Pancreas (tissue), 10 donors: ENCODE measurements at regions of chr6 and their contacts with region 1.

Region 1: DNA sequence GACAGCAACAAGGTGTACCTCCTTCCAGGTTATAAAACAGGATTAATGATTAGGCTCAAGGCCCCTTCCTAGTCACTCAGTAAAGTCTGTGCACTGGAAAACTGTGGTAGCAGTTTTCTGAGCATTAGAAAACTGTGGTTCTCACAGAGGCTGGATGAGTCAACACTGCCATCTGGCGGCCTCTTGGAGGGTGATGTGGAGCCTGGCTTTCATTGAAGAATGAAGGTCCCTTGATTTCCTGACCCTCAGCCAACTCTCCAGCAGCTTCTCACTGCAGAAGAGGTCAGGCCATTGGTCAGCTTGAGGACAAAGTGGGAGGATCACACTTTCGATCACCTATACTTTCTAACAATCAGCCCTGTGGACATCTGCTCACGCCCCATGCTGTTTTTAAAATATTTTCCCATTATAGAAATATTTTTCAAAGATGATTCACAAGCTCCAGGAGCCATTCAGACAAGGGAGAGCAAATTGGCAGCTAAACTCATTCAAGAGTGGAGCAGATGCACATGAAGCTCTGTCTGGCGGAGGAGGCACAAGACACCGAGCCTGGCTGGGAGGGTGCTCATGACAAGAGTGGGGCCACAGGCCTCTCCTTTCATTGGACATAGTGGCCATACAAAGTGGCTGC is 23.2 kb downstream of the PSMB1 start:
- DNase-seq: peak; percentile 60 to 84 (median 78)
- ATAC-seq: peak; percentile 89 to 99 (median 94)
- H3K4me3 ChIP-seq: no peak overlapping the region
- H3K27ac ChIP-seq: no peak overlapping the region
- H3K4me1 ChIP-seq: peaks cover 0 to 6% (median 0%) of the 10 kb centered on the region in 3 donors
- H3K27me3 ChIP-seq: no peaks in the 10 kb centered on the region
- CTCF ChIP-seq: peak; percentile 66 to 83 (median 72)

Region 2: GRCh38 chr6:169789982-169790927 is 739.7 kb before region 1 on chr6:
- intact Hi-C with region 1: loop called in 2 of 3 experiments (anchors 10 kb)
- DNase-seq: peak; percentile 56 to 88 (median 74)
- ATAC-seq: peak; percentile 95 to 99 (median 98)
- H3K4me3 ChIP-seq: peak overlapping the region in 3 of 4 donors; percentile 6 to 48 (median 31)
- H3K27ac ChIP-seq: peak overlapping the region in 2 of 4 donors; percentile 24 to 56
- H3K4me1 ChIP-seq: peaks cover 0 to 9% (median 0%) of the 10 kb centered on the region in 3 donors
- H3K27me3 ChIP-seq: no peaks in the 10 kb centered on the region
- CTCF ChIP-seq: peak; percentile 87 to 98 (median 97)

Region 3: GRCh38 chr6:169824848-169825557 is 705.0 kb before region 1 on chr6:
- intact Hi-C with region 1: loop called in 1 of 3 experiments (anchors 5 kb)
- DNase-seq: peak in 1 of 6 donors; percentile 5
- ATAC-seq: no peak
- H3K4me3 ChIP-seq: no peak overlapping the region
- H3K27ac ChIP-seq: no peak overlapping the region
- H3K4me1 ChIP-seq: no peaks in the 10 kb centered on the region
- H3K27me3 ChIP-seq: no peaks in the 10 kb centered on the region
- CTCF ChIP-seq: no peak